Caco-2 (cell line): ENCODE measurements at regions of chrX and their contacts with region 1.

Region 1: DNA sequence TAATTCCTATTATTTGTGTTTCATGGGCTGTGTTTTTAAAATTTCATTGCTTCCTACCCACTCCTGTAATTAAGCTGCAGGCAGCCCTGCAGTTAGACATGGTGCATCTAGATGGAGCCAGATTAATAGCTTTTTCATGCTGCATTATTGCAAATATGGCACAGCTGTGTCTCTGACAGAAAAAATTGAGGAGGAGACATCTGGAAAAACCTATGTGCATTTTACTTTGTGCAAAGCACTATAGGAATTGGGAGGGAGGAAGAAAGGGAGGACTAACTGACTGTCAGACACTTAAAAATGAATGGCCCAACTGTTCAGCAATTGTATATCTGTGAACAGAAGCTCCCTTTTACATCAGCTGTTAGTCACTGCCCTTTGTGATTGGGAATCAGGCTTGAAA is 8.1 kb upstream of the RPGR start:
- DNase-seq: no peak
- H3K4me3 ChIP-seq: no peak overlapping the region
- H3K4me3 Mint-ChIP-seq: no peak overlapping the region
- H3K27ac Mint-ChIP-seq: no peak overlapping the region
- H3K4me1 ChIP-seq: no peaks in the 10 kb centered on the region
- H3K4me1 Mint-ChIP-seq: no peaks in the 10 kb centered on the region
- H3K27me3 ChIP-seq: no peaks in the 10 kb centered on the region
- H3K27me3 Mint-ChIP-seq: no peaks in the 10 kb centered on the region
- CTCF ChIP-seq: peak; percentile 13 to 35

Region 2: GRCh38 chrX:38357747-38358673 is 22.6 kb after region 1 on chrX:
- CTCF ChIA-PET with region 1: no interaction called
- POLR2A ChIA-PET with region 1: no interaction called
- intact Hi-C with region 1: loop called (anchors 1 kb)
- DNase-seq: no peak
- H3K4me3 ChIP-seq: no peak overlapping the region
- H3K4me3 Mint-ChIP-seq: no peak overlapping the region
- H3K27ac Mint-ChIP-seq: no peak overlapping the region
- H3K4me1 ChIP-seq: no peaks in the 10 kb centered on the region
- H3K4me1 Mint-ChIP-seq: no peaks in the 10 kb centered on the region
- H3K27me3 ChIP-seq: no peaks in the 10 kb centered on the region
- H3K27me3 Mint-ChIP-seq: no peaks in the 10 kb centered on the region
- CTCF ChIP-seq: no peak

Region 3: DNA sequence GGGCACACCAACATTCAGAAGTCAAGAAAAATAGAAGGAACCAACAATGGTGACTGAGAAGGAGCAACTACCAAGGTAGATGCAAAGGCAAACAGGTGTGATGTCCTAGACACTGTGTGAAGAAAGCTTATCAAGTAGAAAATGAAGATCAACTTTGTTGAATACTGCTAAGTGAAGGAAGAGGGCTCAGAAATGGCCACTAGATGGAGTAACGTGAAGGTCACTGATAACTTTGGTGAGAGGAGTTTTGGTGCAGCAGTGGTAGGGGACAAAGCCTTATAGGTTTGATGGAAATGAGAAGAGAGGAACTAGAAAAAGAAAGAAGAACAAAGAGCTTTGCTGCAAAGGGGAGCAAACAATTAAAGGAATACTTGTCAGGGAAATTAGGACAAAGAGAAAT is 40.5 kb after region 1 on chrX:
- CTCF ChIA-PET with region 1: no interaction called
- POLR2A ChIA-PET with region 1: no interaction called
- intact Hi-C with region 1: loop called (anchors 1 kb)
- DNase-seq: peak in 1 of 2 experiments; percentile 10
- H3K4me3 ChIP-seq: no peak overlapping the region
- H3K4me3 Mint-ChIP-seq: no peak overlapping the region
- H3K27ac Mint-ChIP-seq: no peak overlapping the region
- H3K4me1 ChIP-seq: no peaks in the 10 kb centered on the region
- H3K4me1 Mint-ChIP-seq: no peaks in the 10 kb centered on the region
- H3K27me3 ChIP-seq: no peaks in the 10 kb centered on the region
- H3K27me3 Mint-ChIP-seq: no peaks in the 10 kb centered on the region
- CTCF ChIP-seq: peak in 1 of 2 experiments; percentile 59